AG04450 (cell line): ENCODE measurements at regions of chr9 and their contacts with region 1.

Region 1: GRCh38 chr9:14441976-14442651 is 128.2 kb upstream of the NFIB start:
- DNase-seq: no peak
- H3K4me3 ChIP-seq: no peak overlapping the region
- H3K27ac ChIP-seq: no peak overlapping the region
- H3K27me3 ChIP-seq: peaks cover 21% of the 10 kb centered on the region
- CTCF ChIP-seq: peak; percentile 33; the same call in 1 of the 2 replicates

Region 2: DNA sequence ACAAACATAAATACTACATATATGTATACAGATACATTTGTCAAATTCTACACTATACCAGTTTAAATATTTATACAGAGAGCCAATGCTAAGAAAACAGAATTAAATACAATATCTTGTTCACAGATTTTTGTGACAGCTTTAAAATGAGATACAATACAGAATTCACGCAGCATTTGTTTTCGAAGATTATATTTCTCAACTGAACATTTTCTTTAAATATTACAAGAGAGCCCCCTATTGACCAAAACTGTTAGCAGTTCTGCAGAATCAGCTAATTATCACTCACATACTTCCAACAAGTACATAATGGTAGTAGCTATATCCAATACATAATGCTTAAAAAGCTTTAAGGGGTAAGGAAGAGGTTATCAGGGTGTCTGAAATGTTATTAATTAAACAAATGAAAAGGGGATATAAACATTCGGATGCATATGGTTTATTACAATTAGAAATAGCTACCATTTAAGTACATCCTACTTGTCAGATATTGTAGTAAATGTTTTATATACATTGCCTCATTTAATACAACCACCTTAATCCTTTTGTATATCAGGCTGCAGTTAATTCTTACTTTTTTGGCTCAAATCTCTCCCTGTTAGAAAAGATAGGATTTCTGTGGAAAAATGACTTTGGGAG is 219.4 kb after region 1 on chr9:
- CTCF ChIA-PET with region 1: interaction called, 10 read pairs
- POLR2A ChIA-PET with region 1: no interaction called
- DNase-seq: peak; percentile 4
- H3K4me3 ChIP-seq: no peak overlapping the region
- H3K27ac ChIP-seq: no peak overlapping the region
- H3K27me3 ChIP-seq: no peaks in the 10 kb centered on the region
- CTCF ChIP-seq: peak; percentile 65